HCT116 (cell line): ENCODE measurements at regions of chr19 and their contacts with region 1.

Region 1: DNA sequence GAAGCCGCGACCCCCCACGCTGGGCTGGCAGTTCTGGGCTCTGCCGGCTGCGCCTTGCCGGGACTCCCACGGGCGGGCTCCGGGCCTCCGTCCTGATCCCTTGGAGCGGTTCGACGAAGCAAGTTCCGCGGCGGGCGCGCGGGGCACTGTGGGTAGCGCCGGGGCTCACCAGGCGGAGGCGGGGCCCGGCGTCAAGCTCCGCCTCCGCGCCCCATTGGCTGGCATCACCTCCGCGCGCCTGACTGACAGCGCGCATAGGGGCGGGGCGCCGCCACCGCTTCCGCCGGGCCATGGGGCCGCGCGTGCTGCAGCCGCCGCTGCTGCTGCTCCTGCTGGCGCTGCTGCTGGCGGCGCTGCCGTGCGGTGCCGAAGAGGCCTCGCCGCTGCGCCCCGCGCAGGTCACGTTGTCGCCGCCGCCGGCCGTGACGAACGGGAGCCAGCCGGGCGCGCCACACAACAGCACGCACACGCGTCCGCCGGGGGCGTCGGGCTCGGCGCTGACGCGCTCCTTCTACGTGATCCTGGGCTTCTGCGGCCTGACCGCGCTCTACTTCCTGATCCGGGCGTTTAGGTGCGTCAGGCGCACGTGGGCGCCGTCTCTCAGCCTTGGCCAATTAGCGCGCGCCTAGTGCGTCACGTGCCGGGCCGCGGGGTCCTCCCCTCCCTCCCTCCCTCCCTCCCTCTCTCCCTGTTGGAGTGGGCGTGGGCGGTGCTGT is at the start of gene FAM174C:
- DNase-seq: peak; percentile 93
- ATAC-seq: peak; percentile 80
- H3K4me3 ChIP-seq: peak within 1 kb of the TSS; percentile 84 to 85
- H3K27ac ChIP-seq: peak within 1 kb of the TSS; percentile 100
- H3K4me1 ChIP-seq: peaks cover 24 to 55% of the 10 kb centered on the region in 2 experiments
- H3K27me3 ChIP-seq: no peaks in the 10 kb centered on the region
- CTCF ChIP-seq: no peak
- POLR2A ChIP-seq: peak; percentile 83
- RAD21 ChIP-seq: no peak
- total RNA-seq, gene FAM174C: 77.1 TPM

Region 2: GRCh38 chr19:1183534-1184172 is 91.8 kb before region 1 on chr19:
- CTCF ChIA-PET with region 1: no interaction called
- POLR2A ChIA-PET with region 1: no interaction called
- RAD21 ChIA-PET with region 1: no interaction called
- intact Hi-C with region 1: no loop called
- DNase-seq: peak; percentile 73
- ATAC-seq: peak; percentile 74
- H3K4me3 ChIP-seq: peak overlapping the region; percentile 9 to 28; a peak in 3 of 4 replicates
- H3K27ac ChIP-seq: peak overlapping the region; percentile 89
- H3K4me1 ChIP-seq: peaks cover 68 to 88% of the 10 kb centered on the region in 2 experiments
- H3K27me3 ChIP-seq: no peaks in the 10 kb centered on the region
- CTCF ChIP-seq: no peak
- POLR2A ChIP-seq: no peak
- RAD21 ChIP-seq: no peak; the same call in 1 of the 2 replicates

Region 3: DNA sequence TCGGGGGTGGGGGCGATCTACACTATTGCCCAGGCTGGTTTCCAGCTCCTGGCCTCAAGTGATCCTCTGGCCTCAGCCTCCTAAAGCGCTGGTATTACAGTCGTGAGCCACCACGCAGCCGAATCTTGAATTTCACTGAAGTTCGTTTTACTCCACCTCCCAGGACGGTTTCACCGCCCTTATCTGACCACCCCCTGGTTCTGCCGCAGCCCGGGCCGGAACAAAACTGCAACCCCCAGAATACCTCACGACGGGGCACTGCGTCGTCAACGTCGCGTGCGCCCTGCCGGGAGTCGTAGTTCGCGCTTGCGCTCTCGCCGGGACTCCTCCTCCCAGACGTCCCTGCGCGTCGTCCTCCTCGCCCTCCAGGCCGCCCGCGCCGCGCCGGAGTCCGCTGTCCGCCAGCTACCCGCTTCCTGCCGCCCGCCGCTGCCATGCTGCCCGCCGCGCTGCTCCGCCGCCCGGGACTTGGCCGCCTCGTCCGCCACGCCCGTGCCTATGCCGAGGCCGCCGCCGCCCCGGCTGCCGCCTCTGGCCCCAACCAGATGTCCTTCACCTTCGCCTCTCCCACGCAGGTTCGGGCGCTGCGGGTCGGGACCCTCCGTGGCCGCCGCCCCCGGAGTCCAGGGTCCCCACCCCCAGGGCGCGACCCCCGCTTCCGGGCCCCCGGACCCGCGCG is 33.9 kb before region 1 on chr19 and contains the start of gene ATP5F1D:
- CTCF ChIA-PET with region 1: interaction called, 31 read pairs
- POLR2A ChIA-PET with region 1: interaction called, 12 read pairs
- RAD21 ChIA-PET with region 1: interaction called in 1 of 2 experiments, 4 read pairs
- intact Hi-C with region 1: no loop called
- DNase-seq: no peak
- ATAC-seq: peak; percentile 60
- H3K4me3 ChIP-seq: peak within 1 kb of the TSS; percentile 87 to 89
- H3K27ac ChIP-seq: peak within 1 kb of the TSS; percentile 100
- H3K4me1 ChIP-seq: peaks cover 52 to 70% of the 10 kb centered on the region in 2 experiments
- H3K27me3 ChIP-seq: no peaks in the 10 kb centered on the region
- CTCF ChIP-seq: no peak
- POLR2A ChIP-seq: peak; percentile 61
- RAD21 ChIP-seq: no peak
- total RNA-seq, gene ATP5F1D: 428 TPM

Region 4: DNA sequence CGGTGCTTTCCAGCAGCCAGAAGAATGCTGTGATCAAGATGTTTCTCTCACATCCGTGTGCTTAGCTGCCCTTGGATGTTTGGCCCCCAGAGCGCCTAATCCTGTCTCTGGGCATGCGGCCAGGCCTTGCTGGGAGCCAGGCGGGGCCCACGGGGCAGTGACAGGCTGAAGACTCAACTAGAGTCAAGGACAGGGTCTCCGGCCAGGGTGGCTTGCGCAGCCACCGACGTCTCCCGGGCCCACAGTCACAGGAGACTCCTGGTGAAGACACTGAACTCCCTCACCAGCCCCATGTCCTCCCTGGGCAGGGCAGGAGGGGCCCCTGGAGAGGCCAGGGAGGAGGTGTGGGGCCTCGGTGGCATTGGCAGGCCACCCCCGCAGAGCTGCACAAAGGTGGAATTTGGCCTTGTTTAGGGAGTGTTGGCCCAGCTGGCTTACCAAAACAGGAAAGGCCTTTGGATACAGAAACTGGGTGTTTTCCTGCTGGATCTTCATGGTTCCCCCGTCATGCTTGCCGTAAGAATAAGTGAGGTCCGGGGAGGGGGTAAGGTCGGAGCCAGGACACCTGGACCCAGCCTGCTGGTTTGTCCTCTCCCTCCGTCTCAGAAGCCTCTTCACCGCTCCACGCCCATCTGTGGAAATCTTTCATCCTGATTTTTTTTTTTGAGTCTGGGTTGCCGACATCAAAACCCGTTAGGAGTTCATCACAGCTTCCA is 98.3 kb after region 1 on chr19:
- CTCF ChIA-PET with region 1: no interaction called
- POLR2A ChIA-PET with region 1: no interaction called
- RAD21 ChIA-PET with region 1: interaction called in 1 of 2 experiments, 4 read pairs
- intact Hi-C with region 1: loop called (anchors 1 kb)
- DNase-seq: no peak
- ATAC-seq: no peak
- H3K4me3 ChIP-seq: no peak overlapping the region
- H3K27ac ChIP-seq: no peak overlapping the region; the same call in 1 of the 2 replicates
- H3K4me1 ChIP-seq: no peaks in the 10 kb centered on the region
- H3K27me3 ChIP-seq: no peaks in the 10 kb centered on the region
- CTCF ChIP-seq: no peak
- POLR2A ChIP-seq: no peak
- RAD21 ChIP-seq: no peak

Region 5: DNA sequence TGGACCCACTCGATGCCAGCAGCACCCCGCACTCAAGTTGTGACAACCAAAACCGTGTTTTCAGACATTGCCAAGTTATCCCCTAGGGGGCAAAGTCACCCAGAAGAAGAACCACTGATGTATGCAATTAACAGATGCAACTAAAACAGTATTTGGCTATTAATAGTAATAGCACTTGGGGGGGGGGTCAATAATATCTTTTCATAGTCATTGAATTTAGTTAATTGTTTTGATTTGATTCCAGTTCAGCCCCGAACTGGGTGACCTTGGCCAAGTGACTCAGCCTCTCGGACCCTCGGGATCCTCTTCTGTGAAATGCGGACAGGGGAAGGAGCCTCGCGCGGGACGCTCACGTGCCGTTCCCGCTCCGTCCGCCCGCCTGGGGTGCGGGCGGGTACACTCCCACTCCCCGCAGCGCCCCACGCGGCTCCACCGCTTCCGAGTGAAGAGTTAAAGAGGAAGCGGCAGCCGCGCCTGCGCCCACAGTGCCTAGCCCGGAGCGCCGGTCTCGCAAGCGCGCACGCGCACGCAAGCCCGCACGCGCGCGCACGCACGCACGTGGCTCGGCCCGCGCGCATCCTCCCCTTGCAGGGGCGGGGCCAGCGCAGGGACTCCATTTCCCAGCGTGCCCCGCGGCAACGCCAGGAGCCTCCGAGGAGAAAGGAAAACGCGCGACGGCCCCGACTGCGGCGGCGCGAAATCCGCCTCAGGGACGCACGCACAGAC is 131.5 kb after region 1 on chr19:
- CTCF ChIA-PET with region 1: no interaction called
- POLR2A ChIA-PET with region 1: no interaction called
- RAD21 ChIA-PET with region 1: no interaction called
- intact Hi-C with region 1: loop called (anchors 10 kb)
- DNase-seq: peak; percentile 96
- ATAC-seq: peak; percentile 84
- H3K4me3 ChIP-seq: peak overlapping the region; percentile 54 to 61
- H3K27ac ChIP-seq: peak overlapping the region; percentile 98
- H3K4me1 ChIP-seq: peaks cover 26 to 54% of the 10 kb centered on the region in 2 experiments
- H3K27me3 ChIP-seq: no peaks in the 10 kb centered on the region
- CTCF ChIP-seq: peak in 2 of 3 experiments; percentile 55 to 66; a peak in 5 of 6 replicates
- POLR2A ChIP-seq: peak; percentile 75
- RAD21 ChIP-seq: no peak

Region 6: DNA sequence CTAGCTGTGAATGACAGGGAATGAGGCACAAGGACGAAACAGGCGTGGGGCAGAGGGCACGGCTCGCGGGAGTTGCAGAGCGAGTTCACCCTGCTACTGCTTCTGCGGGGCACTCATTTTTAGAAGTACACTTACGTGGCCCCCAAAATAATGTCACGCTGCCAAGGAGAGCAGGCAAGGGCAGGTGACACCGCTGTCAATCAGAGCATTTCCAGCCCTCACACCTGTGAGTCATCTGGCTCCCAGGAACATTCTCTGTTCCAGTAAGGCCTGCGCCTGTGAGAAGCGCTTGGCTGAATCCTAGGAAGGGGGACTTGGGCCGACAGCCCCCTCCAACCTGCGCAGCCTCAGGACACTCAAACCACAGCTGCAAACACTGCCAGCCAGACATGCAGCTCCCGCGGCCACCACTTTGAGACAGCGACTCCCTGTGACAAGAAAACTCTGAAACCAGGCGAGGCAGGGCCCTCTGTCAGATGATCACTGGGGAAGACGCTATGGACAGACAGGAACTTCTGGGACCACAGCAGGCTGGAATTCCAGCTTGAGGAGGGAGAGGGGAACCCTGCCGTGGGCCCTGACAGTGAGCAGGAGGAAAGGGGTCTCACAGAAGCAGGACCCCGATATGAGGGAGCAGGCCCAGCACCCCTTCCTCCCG is 901.0 kb after region 1 on chr19:
- CTCF ChIA-PET with region 1: no interaction called
- POLR2A ChIA-PET with region 1: no interaction called
- RAD21 ChIA-PET with region 1: no interaction called
- intact Hi-C with region 1: no loop called
- DNase-seq: no peak
- ATAC-seq: peak; percentile 44; the same call in 1 of the 2 replicates
- H3K4me3 ChIP-seq: no peak overlapping the region
- H3K27ac ChIP-seq: peak overlapping the region; percentile 26; the same call in 1 of the 2 replicates
- H3K4me1 ChIP-seq: peaks cover 3 to 48% of the 10 kb centered on the region in 2 experiments; a peak in 3 of 4 replicates
- H3K27me3 ChIP-seq: no peaks in the 10 kb centered on the region
- CTCF ChIP-seq: no peak
- POLR2A ChIP-seq: no peak
- RAD21 ChIP-seq: no peak